Activated T-helper 1 cell treated with anti-CD3 and anti-CD28 coated beads, Interleukin-12 subunit alpha, Interleukin-12 subunit beta, Interleukin-2, Interleukin-4 antibody, amounts not matched to agents 30 ng/mL and 10 ng/mL and 1 ng/mL, durations not matched to agents 14 hours and 24 hours and 36 hours (primary cell): ENCODE measurements at regions of chrX and their contacts with region 1.

Region 1: DNA sequence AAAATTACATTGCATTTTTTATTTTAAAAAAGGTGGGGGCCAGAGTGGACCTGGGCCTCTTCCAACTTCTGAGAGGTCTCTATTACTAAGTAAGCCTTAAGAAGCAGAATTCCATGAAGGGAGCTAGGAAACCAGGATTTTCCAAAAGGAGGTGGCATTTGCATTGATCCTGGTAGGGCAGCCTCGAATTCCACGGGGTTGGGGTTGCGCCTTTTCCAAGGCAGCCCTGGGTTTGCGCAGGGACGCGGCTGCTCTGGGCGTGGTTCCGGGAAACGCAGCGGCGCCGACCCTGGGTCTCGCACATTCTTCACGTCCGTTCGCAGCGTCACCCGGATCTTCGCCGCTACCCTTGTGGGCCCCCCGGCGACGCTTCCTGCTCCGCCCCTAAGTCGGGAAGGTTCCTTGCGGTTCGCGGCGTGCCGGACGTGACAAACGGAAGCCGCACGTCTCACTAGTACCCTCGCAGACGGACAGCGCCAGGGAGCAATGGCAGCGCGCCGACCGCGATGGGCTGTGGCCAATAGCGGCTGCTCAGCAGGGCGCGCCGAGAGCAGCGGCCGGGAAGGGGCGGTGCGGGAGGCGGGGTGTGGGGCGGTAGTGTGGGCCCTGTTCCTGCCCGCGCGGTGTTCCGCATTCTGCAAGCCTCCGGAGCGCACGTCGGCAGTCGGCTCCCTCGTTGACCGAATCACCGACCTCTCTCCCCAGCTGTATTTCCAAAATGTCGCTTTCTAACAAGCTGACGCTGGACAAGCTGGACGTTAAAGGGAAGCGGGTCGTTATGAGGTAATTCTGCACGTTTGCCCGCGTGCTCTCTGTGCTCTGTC is at the start of gene PGK1:
- DNase-seq: peak; percentile 92
- H3K4me3 Mint-ChIP-seq: peak within 1 kb of the TSS; percentile 97
- H3K27ac Mint-ChIP-seq: peak within 1 kb of the TSS; percentile 91
- H3K4me1 Mint-ChIP-seq: peaks cover 51% of the 10 kb centered on the region
- H3K27me3 Mint-ChIP-seq: no peaks in the 10 kb centered on the region
- total RNA-seq, gene PGK1: 799 and 814 TPM in 2 replicates

Region 2: GRCh38 chrX:77785486-77786364 is 318.1 kb before region 1 on chrX and contains the start of gene ATRX:
- intact Hi-C with region 1: loop called (anchors 5 kb)
- DNase-seq: peak; percentile 72
- H3K4me3 Mint-ChIP-seq: peak within 1 kb of the TSS; percentile 100
- H3K27ac Mint-ChIP-seq: peak within 1 kb of the TSS; percentile 100
- H3K4me1 Mint-ChIP-seq: peaks cover 33% of the 10 kb centered on the region
- H3K27me3 Mint-ChIP-seq: no peaks in the 10 kb centered on the region
- total RNA-seq, gene ATRX: 63.9 and 72.7 TPM in 2 replicates

Region 3: DNA sequence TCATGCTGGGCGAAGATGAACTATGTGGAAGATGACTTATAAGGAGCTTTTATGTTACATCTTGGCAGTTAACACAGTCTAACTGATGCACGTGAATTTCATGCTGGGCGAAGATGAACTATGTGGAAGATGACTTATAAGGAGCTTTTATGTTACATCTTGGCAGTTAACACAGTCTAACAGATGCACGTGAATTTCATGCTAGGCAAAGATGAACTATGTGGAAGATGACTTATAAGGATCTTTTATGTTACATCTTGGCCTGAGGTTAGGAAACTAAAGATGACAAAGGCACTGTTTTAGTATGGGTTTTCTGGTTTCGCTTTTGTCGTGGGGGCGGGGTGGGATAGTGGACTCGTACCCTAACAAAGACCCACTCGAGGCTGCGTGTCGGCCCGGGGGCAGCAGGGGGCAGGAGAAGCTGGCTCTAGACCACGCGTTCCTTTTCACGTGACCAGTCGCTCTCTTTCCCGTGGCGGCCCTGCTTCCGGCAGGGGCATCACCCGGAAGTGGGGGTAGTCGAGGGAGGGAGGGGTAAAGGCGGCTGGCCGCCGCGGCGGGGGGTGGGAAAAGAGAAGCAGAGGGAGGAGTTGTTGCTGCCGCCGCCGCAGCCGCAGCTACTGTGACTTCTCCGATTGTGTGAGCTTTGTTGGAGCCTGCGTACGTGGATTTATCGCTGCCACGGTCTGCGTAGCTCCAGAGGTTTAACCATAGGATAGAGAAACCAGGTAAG is 193.6 kb before region 1 on chrX and contains the start of gene ATP7A:
- intact Hi-C with region 1: loop called (anchors 1 kb)
- DNase-seq: peak; percentile 85
- H3K4me3 Mint-ChIP-seq: peak within 1 kb of the TSS; percentile 98
- H3K27ac Mint-ChIP-seq: peak within 1 kb of the TSS; percentile 97
- H3K4me1 Mint-ChIP-seq: peaks cover 16% of the 10 kb centered on the region
- H3K27me3 Mint-ChIP-seq: no peaks in the 10 kb centered on the region
- total RNA-seq, gene ATP7A: 6.1 and 6.9 TPM in 2 replicates

Region 4: GRCh38 chrX:78024349-78025108 is 79.3 kb before region 1 on chrX:
- intact Hi-C with region 1: loop called (anchors 2 kb)
- DNase-seq: no peak
- H3K4me3 Mint-ChIP-seq: no peak overlapping the region
- H3K27ac Mint-ChIP-seq: no peak overlapping the region
- H3K4me1 Mint-ChIP-seq: no peaks in the 10 kb centered on the region
- H3K27me3 Mint-ChIP-seq: no peaks in the 10 kb centered on the region

Region 5: DNA sequence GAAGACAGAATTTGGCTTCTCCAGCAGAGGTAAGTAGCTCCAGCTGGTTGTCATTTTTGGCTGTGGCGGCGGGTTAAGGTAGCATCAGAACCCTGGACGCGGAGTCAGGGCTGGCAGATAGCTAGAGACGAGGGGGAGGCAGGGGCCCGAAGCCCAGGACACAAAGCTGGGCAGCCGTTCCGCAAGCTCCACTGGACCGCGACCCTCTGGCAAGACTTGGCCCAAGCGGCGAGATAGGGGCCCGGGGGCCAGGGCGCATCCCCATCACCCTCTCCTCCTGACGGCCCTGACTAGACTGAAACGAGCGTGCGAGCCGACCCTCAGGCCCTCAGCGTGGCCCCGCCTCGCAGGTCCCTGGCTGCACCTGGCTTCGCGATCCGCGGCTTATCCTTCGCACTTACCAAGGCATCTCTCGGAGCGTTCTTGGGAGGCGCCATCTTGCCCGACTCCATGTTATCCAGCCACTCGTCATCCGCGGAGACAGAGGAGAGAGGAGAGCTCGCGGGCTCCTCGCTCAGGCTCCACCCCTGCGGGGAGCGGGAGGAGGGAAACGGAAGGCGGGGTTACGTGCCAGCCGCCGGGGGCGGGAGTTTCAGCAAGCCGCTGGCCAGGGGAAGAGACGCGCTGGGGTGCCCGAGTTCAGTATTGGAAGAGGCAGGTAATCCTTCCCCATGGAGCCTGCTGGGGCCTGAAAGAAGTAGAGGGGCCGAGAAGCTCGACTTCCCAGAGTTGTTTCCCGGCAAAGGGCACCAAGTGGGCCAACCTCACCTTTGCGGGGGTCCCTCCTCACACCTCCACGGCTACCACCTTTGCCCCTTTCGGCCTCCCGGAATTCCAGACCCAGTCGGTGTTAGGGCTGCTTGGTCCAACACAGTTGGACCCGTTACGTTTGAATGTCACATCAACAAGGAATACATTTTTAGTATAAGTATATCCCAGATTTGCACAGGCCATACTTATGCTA is 35.6 kb after region 1 on chrX and contains the start of gene TAF9B:
- intact Hi-C with region 1: loop called (anchors 2 kb)
- DNase-seq: peak; percentile 78
- H3K4me3 Mint-ChIP-seq: peak within 1 kb of the TSS; percentile 92
- H3K27ac Mint-ChIP-seq: peak within 1 kb of the TSS; percentile 86
- H3K4me1 Mint-ChIP-seq: no peaks in the 10 kb centered on the region
- H3K27me3 Mint-ChIP-seq: no peaks in the 10 kb centered on the region
- total RNA-seq, gene TAF9B: 14.9 and 15.0 TPM in 2 replicates

Region 6: GRCh38 chrX:79366873-79367749 is 1263.3 kb after region 1 on chrX and contains the start of gene ITM2A:
- intact Hi-C with region 1: loop called (anchors 10 kb)
- DNase-seq: peak; percentile 37
- H3K4me3 Mint-ChIP-seq: peak within 1 kb of the TSS; percentile 94
- H3K27ac Mint-ChIP-seq: peak within 1 kb of the TSS; percentile 95
- H3K4me1 Mint-ChIP-seq: peaks cover 35% of the 10 kb centered on the region
- H3K27me3 Mint-ChIP-seq: no peaks in the 10 kb centered on the region
- total RNA-seq, gene ITM2A: 114 and 116 TPM in 2 replicates